ENCODE measurements at regions of chr5 and their contacts with region 1.

Region 1: DNA sequence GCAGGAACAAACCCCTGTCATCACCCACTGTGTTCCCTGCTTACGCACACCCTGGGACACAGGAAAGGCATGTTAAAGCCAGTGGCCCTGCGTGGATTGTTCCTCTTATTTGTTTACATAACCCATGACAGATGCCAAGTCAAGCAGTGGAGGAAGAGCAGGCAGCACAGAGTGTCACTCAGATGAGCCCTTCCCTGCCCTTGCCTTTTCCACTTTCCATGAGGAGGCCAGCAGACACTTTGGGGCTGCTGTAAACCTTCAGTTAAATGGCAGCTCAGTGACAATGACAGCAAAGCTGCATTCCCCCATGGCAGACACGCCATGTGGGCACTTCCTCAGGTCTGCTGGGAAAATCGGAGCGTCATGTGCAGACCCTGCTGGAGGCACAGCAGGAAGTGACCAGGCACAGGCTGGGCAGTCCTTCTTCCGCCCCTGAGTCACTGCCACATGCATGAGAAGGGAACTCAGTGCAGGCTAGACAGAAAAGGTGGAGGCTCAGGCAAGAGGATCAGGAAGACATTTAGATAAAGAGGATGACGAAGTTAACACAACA is 216.8 kb upstream of the PIK3R1 start:
- DNase-seq: no peak
- H3K4me3 ChIP-seq: no peak overlapping the region
- H3K27ac ChIP-seq: no peak overlapping the region
- H3K4me1 ChIP-seq: no peaks in the 10 kb centered on the region
- H3K27me3 ChIP-seq: no peaks in the 10 kb centered on the region
- CTCF ChIP-seq: no peak

Region 2: GRCh38 chr5:67957374-67957773 is 41.4 kb before region 1 on chr5:
- CTCF ChIA-PET with region 1: no interaction called
- dilution Hi-C with region 1: loop called (anchors 5 kb)
- in situ Hi-C with region 1: no loop called
- intact Hi-C with region 1: no loop called
- DNase-seq: no peak
- H3K4me3 ChIP-seq: no peak overlapping the region
- H3K27ac ChIP-seq: no peak overlapping the region
- H3K4me1 ChIP-seq: peaks cover 11% of the 10 kb centered on the region
- H3K27me3 ChIP-seq: no peaks in the 10 kb centered on the region
- CTCF ChIP-seq: no peak

Region 3: GRCh38 chr5:68033961-68034571 is 35.3 kb after region 1 on chr5:
- CTCF ChIA-PET with region 1: no interaction called
- dilution Hi-C with region 1: no loop called
- in situ Hi-C with region 1: no loop called
- intact Hi-C with region 1: no loop called
- DNase-seq: no peak
- H3K4me3 ChIP-seq: no peak overlapping the region
- H3K27ac ChIP-seq: no peak overlapping the region
- H3K4me1 ChIP-seq: peaks cover 10% of the 10 kb centered on the region
- H3K27me3 ChIP-seq: no peaks in the 10 kb centered on the region
- CTCF ChIP-seq: no peak